IMR-90 (cell line): ENCODE measurements at regions of chr1 and their contacts with region 1.

Region 1: DNA sequence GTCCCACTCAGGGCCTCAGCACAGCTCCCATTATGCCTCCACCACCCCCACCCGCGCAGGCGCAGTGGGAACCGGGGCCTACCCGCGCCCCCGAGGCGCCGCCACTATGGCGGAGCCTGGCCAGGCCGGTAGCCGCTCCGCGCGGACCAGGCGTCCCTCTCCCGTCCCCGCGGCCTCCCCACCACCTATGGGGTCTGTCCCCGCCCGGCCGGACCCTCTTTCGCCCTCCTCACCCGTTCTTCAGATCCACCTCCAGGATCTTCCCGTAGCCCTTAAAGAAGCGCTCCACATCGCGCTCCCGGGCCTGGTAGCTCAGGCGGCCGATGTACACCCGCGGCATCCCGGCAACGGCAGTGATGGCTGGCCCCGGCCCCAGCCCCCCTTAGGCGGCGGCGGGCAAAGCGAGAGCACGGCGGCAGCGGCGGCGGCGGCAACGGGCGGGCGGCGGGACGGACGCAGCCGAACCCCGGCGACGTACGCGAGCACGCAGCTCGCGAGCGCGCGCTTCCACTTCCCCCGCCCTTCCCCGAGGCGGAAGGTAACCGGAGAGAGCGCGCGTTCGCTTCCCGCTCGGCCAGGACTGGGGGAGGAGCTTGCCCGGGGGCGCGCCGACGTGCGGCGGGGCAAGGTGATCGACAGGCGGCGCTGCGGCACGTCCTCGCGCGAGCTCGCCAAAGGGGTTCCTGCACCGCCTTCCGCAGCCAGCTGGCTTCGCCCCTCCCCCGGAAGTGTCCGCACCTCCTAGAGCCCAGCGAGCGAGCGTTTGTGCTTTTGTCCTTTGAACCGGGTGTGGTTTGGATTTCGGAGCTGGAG is at the start of gene SRSF4:
- DNase-seq: peak; percentile 98
- ATAC-seq: peak; percentile 94
- H3K4me3 ChIP-seq: peak within 1 kb of the TSS; percentile 84
- H3K27ac ChIP-seq: peak within 1 kb of the TSS; percentile 97
- H3K4me1 ChIP-seq: peaks cover 10% of the 10 kb centered on the region
- H3K27me3 ChIP-seq: no peaks in the 10 kb centered on the region
- CTCF ChIP-seq: peak; percentile 82
- POLR2A ChIP-seq: peak; percentile 90
- RAD21 ChIP-seq: peak; percentile 59
- total RNA-seq, gene SRSF4: 20.8 and 38.6 TPM in 2 replicates

Region 2: GRCh38 chr1:28480308-28480707 is 701.3 kb before region 1 on chr1:
- CTCF ChIA-PET with region 1: no interaction called
- POLR2A ChIA-PET with region 1: no interaction called
- dilution Hi-C with region 1: no loop called
- in situ Hi-C with region 1: no loop called
- intact Hi-C with region 1: no loop called
- DNase-seq: no peak
- ATAC-seq: no peak
- H3K4me3 ChIP-seq: no peak overlapping the region
- H3K27ac ChIP-seq: no peak overlapping the region
- H3K4me1 ChIP-seq: no peaks in the 10 kb centered on the region
- H3K27me3 ChIP-seq: no peaks in the 10 kb centered on the region
- CTCF ChIP-seq: no peak
- POLR2A ChIP-seq: no peak
- RAD21 ChIP-seq: no peak

Region 3: DNA sequence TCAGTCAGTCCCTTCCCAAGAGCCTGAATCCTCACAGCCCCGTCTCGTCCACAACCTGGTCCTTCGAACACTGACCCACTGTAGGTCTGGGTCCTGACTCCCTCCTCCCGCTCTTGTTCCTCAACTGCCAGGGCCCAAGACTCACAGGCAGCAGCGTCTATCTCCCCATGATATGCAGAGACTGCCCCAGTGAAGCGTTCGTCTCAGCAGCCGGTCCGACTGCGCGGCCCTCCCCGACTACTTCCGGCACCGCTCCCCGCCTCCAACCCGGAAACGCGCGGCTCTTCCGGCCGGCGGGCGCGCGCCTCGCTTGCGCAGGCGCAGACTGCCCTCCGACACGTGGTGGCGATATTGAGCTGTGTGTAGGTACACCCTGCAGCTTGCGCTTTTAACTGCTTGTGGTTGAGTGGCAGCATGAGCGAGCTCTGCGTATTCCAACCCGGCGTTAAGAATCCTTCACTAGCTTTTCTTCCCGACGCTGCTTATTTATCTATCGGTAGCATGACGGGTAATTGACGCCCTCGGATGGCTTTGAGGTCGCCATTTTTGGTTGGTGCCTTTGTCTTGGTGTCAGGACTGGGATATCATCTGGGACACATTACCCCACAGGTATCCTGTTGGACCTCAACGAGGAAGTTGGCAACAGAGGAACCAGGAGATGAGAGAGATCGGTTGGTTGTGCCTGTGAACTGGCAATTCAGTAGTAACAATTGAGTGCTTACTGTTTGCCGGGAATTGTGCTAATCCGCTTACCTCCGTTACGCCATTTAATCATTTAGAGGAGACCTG is 538.6 kb before region 1 on chr1 and contains the start of gene TAF12:
- CTCF ChIA-PET with region 1: no interaction called
- POLR2A ChIA-PET with region 1: no interaction called
- dilution Hi-C with region 1: no loop called
- in situ Hi-C with region 1: no loop called
- intact Hi-C with region 1: no loop called
- DNase-seq: peak; percentile 94
- ATAC-seq: peak; percentile 83
- H3K4me3 ChIP-seq: peak within 1 kb of the TSS; percentile 77
- H3K27ac ChIP-seq: peak within 1 kb of the TSS; percentile 94
- H3K4me1 ChIP-seq: peaks cover 1% of the 10 kb centered on the region
- H3K27me3 ChIP-seq: no peaks in the 10 kb centered on the region
- CTCF ChIP-seq: peak; percentile 51
- POLR2A ChIP-seq: peak; percentile 98
- RAD21 ChIP-seq: peak; percentile 44
- total RNA-seq, gene TAF12: 31.7 and 39.7 TPM in 2 replicates

Region 4: GRCh38 chr1:28840928-28841544 is 340.6 kb before region 1 on chr1:
- CTCF ChIA-PET with region 1: no interaction called
- POLR2A ChIA-PET with region 1: no interaction called
- dilution Hi-C with region 1: no loop called
- in situ Hi-C with region 1: no loop called
- intact Hi-C with region 1: no loop called
- DNase-seq: no peak
- ATAC-seq: no peak
- H3K4me3 ChIP-seq: no peak overlapping the region
- H3K27ac ChIP-seq: no peak overlapping the region
- H3K4me1 ChIP-seq: no peaks in the 10 kb centered on the region
- H3K27me3 ChIP-seq: peaks cover 20% of the 10 kb centered on the region
- CTCF ChIP-seq: no peak
- POLR2A ChIP-seq: no peak
- RAD21 ChIP-seq: no peak

Region 5: GRCh38 chr1:29136391-29136915 is 45.2 kb before region 1 on chr1:
- CTCF ChIA-PET with region 1: no interaction called
- POLR2A ChIA-PET with region 1: interaction called, 28 read pairs
- dilution Hi-C with region 1: no loop called
- in situ Hi-C with region 1: no loop called
- intact Hi-C with region 1: no loop called
- DNase-seq: peak; percentile 58
- ATAC-seq: no peak; the same call in 1 of the 2 replicates
- H3K4me3 ChIP-seq: no peak overlapping the region
- H3K27ac ChIP-seq: no peak overlapping the region
- H3K4me1 ChIP-seq: no peaks in the 10 kb centered on the region; the same call in 1 of the 2 replicates
- H3K27me3 ChIP-seq: 0 out of 2 replicates have a peak, but pooled peaks cover 2% of the 10 kb centered on the region
- CTCF ChIP-seq: no peak
- POLR2A ChIP-seq: no peak
- RAD21 ChIP-seq: no peak